ENCODE measurements at regions of chr11 and their contacts with region 1.

Region 1: GRCh38 chr11:56486801-56487200 is 4.4 kb downstream of the OR5M8 start:
- DNase-seq: no peak
- ATAC-seq: no peak
- H3K4me3 ChIP-seq: no peak overlapping the region
- H3K27ac ChIP-seq: no peak overlapping the region
- H3K4me1 ChIP-seq: no peaks in the 10 kb centered on the region
- H3K27me3 ChIP-seq: no peaks in the 10 kb centered on the region
- CTCF ChIP-seq: no peak
- POLR2A ChIP-seq: no peak
- RAD21 ChIP-seq: no peak

Region 2: GRCh38 chr11:56497010-56497409 is 10.2 kb after region 1 on chr11:
- CTCF ChIA-PET with region 1: no interaction called
- POLR2A ChIA-PET with region 1: no interaction called
- dilution Hi-C with region 1: no loop called
- in situ Hi-C with region 1: no loop called
- intact Hi-C with region 1: no loop called
- DNase-seq: no peak
- ATAC-seq: no peak
- H3K4me3 ChIP-seq: no peak overlapping the region
- H3K27ac ChIP-seq: no peak overlapping the region
- H3K4me1 ChIP-seq: no peaks in the 10 kb centered on the region
- H3K27me3 ChIP-seq: no peaks in the 10 kb centered on the region
- CTCF ChIP-seq: no peak
- POLR2A ChIP-seq: no peak
- RAD21 ChIP-seq: no peak

Region 3: GRCh38 chr11:56533054-56533740 is 46.4 kb after region 1 on chr11:
- CTCF ChIA-PET with region 1: no interaction called
- POLR2A ChIA-PET with region 1: no interaction called
- dilution Hi-C with region 1: no loop called
- in situ Hi-C with region 1: no loop called
- intact Hi-C with region 1: loop called (anchors 2 kb)
- DNase-seq: no peak
- ATAC-seq: no peak
- H3K4me3 ChIP-seq: no peak overlapping the region
- H3K27ac ChIP-seq: no peak overlapping the region
- H3K4me1 ChIP-seq: no peaks in the 10 kb centered on the region
- H3K27me3 ChIP-seq: no peaks in the 10 kb centered on the region
- CTCF ChIP-seq: no peak
- POLR2A ChIP-seq: no peak
- RAD21 ChIP-seq: no peak